ENCODE measurements at regions of chr2 and their contacts with region 1.

Region 1: DNA sequence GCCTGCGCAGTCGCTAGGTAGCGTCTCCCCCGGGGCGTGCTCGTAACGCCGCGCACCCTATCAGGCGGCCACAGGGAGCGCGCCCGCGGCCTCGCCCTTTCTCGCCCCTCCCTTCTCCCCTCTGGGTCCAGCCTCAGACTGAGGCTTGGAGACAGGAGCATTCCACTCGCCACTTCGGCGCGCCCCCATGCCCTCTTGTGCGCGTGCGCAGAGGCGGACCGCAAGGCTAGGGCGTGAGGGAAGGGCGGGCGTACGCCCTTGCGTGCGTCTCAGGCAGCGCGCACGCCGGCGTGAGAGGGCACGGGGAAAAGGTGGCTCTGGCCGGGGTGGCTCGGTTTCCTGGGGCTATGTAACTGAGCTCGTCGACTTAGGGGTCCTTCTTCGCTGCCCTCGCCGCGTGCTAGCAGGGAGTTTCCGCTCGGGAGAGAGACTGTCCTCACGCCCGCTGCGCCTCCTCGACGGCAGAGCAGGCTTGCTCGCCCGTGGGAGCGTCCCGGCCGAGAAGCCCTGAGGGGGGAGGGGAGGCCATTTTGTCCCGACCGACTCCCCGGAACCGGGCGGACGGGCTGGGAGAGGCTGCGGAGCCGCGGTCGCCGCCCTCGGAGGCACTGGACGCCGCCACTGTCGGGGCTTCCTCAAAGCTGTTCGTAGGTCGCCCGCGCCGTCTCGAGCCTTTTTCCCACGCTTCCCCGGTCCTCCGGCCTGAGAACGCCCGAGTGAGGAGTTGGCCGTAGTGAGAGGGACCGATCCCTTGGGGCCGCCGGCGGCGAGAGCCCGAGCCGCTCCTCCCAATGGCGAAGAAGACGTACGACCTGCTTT is at the start of gene RAB10:
- DNase-seq: peak; percentile 99
- H3K4me3 Mint-ChIP-seq: peak within 1 kb of the TSS; percentile 94
- H3K27ac Mint-ChIP-seq: peak within 1 kb of the TSS; percentile 89
- H3K4me1 Mint-ChIP-seq: peaks cover 29% of the 10 kb centered on the region
- H3K27me3 Mint-ChIP-seq: no peaks in the 10 kb centered on the region
- total RNA-seq, gene RAB10: 84.2 to 93.0 TPM

Region 2: DNA sequence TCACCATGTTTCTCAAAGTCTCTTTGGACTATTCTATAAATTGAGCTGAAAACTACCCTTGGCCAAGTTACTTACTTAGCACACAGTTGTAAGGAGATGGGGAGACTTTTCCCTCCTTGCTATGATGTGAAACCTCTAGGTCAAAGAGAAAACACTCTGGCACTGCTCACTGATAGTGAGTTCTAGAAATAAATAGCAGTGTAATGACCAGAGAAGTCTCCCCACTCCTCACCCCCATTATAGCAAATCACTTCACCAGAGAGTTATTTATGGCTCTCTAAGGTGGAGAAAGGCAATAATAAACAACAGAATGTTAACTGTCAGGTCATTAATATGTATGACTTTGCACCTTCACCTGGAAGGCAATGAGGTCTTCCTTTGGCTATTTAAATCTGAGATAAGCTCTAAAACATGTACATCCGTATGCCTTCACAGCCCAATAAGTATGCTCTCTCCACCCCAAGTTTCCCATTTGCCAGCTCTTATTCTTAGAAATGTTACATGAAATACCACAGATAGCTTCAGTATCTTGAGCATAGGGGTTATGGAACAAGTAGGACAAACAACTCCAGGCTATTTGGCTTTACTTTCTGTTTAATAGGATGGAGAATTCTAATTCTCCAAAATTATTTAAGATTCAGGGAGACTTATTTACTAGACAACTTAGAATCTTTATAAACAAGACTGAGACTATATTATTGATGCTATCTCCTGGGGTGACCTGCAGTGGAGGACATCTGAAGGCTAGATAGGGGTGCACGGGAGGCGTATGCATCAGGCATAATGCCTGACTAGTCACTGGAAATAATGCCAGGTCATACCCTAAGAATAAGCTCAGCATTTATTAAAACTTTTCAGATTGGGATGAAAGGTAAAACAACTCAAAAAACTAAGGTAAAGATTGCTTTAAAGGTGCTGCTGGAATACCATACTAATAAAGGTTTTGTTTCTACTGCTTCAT is 295.4 kb before region 1 on chr2:
- CTCF ChIA-PET with region 1: no interaction called
- intact Hi-C with region 1: no loop called
- DNase-seq: no peak
- H3K4me3 Mint-ChIP-seq: no peak overlapping the region
- H3K27ac Mint-ChIP-seq: no peak overlapping the region
- H3K4me1 Mint-ChIP-seq: peaks cover 14% of the 10 kb centered on the region
- H3K27me3 Mint-ChIP-seq: no peaks in the 10 kb centered on the region

Region 3: DNA sequence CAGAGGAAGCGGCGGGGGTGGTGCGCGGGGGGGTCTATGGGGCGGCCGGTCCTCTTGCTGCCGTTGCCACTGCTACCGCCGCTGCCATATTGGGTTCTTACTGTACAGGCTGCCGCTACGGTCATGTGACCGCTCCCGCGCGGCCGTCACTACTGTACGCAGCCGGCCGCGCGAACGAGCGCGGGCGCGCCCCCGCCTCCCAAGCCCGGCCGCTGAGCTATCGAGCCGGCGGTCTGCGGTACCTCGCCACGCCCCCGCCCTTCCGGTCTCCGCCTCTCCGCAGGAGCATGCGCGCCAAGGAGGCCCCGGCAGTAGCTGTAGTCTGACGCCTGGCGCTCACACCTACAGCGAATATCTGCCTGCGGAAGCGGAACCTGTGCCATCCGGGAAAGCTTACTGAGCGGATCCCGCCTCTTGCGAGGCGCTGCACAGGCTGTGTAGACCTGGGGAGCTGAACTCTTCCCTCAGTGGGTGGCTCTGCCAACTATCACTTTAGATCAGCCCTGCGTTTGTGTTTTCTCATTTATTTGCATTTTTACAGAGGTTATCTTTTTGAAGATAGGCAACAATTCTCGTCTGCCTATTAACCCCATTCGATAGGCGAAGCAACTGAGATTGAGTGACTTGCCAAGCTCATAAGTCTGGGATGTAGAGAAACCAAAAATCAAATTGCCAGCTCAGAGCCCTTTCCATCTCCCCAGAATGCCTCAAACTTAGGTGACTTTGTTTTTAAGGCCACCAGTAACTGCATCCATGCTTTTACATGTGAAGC is 155.5 kb before region 1 on chr2 and contains the start of gene ASXL2:
- CTCF ChIA-PET with region 1: no interaction called
- intact Hi-C with region 1: loop called (anchors 1 kb)
- DNase-seq: peak; percentile 97
- H3K4me3 Mint-ChIP-seq: peak within 1 kb of the TSS; percentile 91
- H3K27ac Mint-ChIP-seq: peak within 1 kb of the TSS; percentile 96
- H3K4me1 Mint-ChIP-seq: peaks cover 43% of the 10 kb centered on the region
- H3K27me3 Mint-ChIP-seq: no peaks in the 10 kb centered on the region
- total RNA-seq, gene ASXL2: 25.2 to 29.1 TPM

Region 4: GRCh38 chr2:25964891-25965290 is 69.1 kb before region 1 on chr2:
- CTCF ChIA-PET with region 1: no interaction called
- intact Hi-C with region 1: no loop called
- DNase-seq: no peak
- H3K4me3 Mint-ChIP-seq: no peak overlapping the region
- H3K27ac Mint-ChIP-seq: no peak overlapping the region
- H3K4me1 Mint-ChIP-seq: peaks cover 9% of the 10 kb centered on the region
- H3K27me3 Mint-ChIP-seq: no peaks in the 10 kb centered on the region

Region 5: DNA sequence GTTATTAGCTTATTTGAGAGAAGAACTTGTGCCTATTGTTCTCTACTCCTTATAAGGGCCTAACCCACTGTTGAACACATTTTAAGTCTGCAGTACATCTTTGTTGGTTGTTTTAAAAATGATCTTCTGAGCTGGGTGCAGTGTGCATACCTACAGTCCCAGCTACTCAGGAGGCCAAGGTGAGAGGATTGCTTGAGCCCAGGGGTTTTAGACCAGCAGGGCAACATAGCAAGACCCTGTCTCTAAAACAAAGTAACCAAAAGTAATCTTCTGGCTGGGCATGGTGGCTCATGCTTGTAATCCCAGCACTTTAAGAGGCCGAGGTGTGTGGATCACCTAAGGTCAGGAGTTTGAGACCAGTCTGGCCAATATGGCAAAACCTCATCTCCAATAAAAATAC is 25.9 kb before region 1 on chr2:
- CTCF ChIA-PET with region 1: no interaction called
- intact Hi-C with region 1: no loop called
- DNase-seq: no peak
- H3K4me3 Mint-ChIP-seq: no peak overlapping the region
- H3K27ac Mint-ChIP-seq: no peak overlapping the region
- H3K4me1 Mint-ChIP-seq: peaks cover 2% of the 10 kb centered on the region
- H3K27me3 Mint-ChIP-seq: no peaks in the 10 kb centered on the region

Region 6: DNA sequence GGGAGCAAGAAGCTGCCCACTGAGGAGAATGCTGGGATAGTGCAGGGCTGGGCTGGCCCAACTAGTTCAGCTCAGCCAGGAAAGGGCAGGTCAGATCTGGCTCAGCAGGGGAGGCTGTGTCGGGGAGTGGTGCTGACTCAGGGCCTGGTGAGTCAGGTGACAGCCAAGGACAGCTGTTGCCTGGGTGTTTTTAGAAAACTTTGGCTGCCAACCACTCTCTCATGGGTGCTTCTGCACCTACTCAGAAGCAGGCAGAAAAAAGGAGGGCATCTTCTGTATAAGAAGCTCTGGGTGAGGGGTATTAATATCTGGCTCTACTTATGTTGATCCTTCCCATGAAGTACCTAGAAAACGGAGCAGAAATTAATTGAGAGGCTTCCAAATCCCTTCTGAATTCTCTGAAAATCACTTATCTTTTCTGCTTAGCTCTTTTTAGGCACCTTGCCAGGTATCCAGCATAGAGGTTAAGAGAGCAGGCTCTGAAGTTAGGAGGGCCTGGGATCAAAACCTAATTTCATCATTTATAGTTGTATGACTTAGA is 15.8 kb before region 1 on chr2:
- CTCF ChIA-PET with region 1: no interaction called
- intact Hi-C with region 1: no loop called
- DNase-seq: peak; percentile 57
- H3K4me3 Mint-ChIP-seq: no peak overlapping the region
- H3K27ac Mint-ChIP-seq: no peak overlapping the region
- H3K4me1 Mint-ChIP-seq: no peaks in the 10 kb centered on the region
- H3K27me3 Mint-ChIP-seq: no peaks in the 10 kb centered on the region

Region 7: DNA sequence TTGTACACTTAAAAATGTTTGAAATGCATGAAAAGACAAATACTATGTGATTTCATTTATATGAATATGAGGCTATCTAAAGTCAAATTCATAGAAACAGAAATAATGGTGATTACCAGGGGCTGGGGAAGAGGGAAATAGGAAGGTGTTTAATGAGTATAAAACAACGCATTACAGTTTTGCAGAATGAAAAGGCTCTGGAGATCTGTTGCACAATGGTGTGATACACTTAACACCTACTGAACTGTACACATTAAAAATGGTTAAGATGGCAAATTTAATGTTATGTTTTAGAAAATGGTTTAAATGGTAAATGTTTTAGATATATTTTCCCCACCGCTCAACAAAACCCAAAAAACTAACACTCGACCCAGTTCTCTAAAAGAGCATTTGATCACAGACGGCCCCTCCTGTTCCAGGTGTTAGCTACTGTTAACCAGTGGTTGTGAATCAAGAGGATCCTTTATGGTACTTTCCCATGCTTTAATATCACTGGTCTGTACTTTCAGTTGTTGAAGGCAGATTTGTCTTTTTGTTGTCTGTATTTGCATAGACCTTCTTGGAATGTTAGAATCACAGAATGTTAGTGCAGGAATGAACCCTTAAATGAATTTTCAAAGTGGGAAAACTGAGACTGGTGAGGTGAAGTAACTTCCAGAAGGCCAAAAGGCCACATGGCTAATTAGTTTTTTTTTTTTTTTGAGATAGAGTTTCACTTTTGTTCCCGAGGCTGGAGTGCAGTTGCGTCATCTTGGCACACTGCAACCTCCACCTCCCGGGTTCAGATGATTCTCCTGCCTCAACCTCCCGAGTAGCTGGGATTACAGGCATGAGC is 10.1 kb after region 1 on chr2:
- CTCF ChIA-PET with region 1: no interaction called
- intact Hi-C with region 1: loop called (anchors 1 kb)
- DNase-seq: no peak
- H3K4me3 Mint-ChIP-seq: no peak overlapping the region
- H3K27ac Mint-ChIP-seq: no peak overlapping the region
- H3K4me1 Mint-ChIP-seq: peaks cover 58% of the 10 kb centered on the region
- H3K27me3 Mint-ChIP-seq: no peaks in the 10 kb centered on the region

Region 8: GRCh38 chr2:26088032-26088643 is 54.1 kb after region 1 on chr2:
- CTCF ChIA-PET with region 1: interaction called, 4 read pairs
- intact Hi-C with region 1: loop called (anchors 5 kb)
- DNase-seq: peak; percentile 17
- H3K4me3 Mint-ChIP-seq: no peak overlapping the region
- H3K27ac Mint-ChIP-seq: no peak overlapping the region
- H3K4me1 Mint-ChIP-seq: peaks cover 48% of the 10 kb centered on the region
- H3K27me3 Mint-ChIP-seq: no peaks in the 10 kb centered on the region

Region 9: GRCh38 chr2:26785431-26786206 is 751.6 kb after region 1 on chr2 and contains the start of gene CENPA:
- CTCF ChIA-PET with region 1: no interaction called
- intact Hi-C with region 1: loop called (anchors 10 kb)
- DNase-seq: peak; percentile 98
- H3K4me3 Mint-ChIP-seq: peak within 1 kb of the TSS; percentile 72
- H3K27ac Mint-ChIP-seq: peak within 1 kb of the TSS; percentile 15
- H3K4me1 Mint-ChIP-seq: peaks cover 10% of the 10 kb centered on the region
- H3K27me3 Mint-ChIP-seq: peaks cover 20% of the 10 kb centered on the region
- total RNA-seq, gene CENPA: 42.9 to 43.6 TPM